Activated T-helper 1 cell treated with anti-CD3 and anti-CD28 coated beads, Interleukin-12 subunit alpha, Interleukin-12 subunit beta, Interleukin-2, Interleukin-4 antibody, amounts not matched to agents 30 ng/mL and 10 ng/mL and 1 ng/mL, durations not matched to agents 14 hours and 24 hours and 36 hours (primary cell): ENCODE measurements at regions of chr14 and their contacts with region 1.

Region 1: GRCh38 chr14:77580964-77581505 is 35.4 kb downstream of the SPTLC2 start:
- DNase-seq: no peak
- H3K4me3 Mint-ChIP-seq: peak overlapping the region; percentile 52
- H3K27ac Mint-ChIP-seq: no peak overlapping the region
- H3K4me1 Mint-ChIP-seq: peaks cover 24% of the 10 kb centered on the region
- H3K27me3 Mint-ChIP-seq: no peaks in the 10 kb centered on the region

Region 2: GRCh38 chr14:77641534-77642341 is 60.7 kb after region 1 on chr14:
- intact Hi-C with region 1: loop called (anchors 2 kb)
- DNase-seq: peak; percentile 46
- H3K4me3 Mint-ChIP-seq: peak overlapping the region; percentile 78
- H3K27ac Mint-ChIP-seq: peak overlapping the region; percentile 92
- H3K4me1 Mint-ChIP-seq: peaks cover 20% of the 10 kb centered on the region
- H3K27me3 Mint-ChIP-seq: no peaks in the 10 kb centered on the region

Region 3: GRCh38 chr14:77707724-77708408 is 126.8 kb after region 1 on chr14 and contains the starts of genes ALKBH1 and SLIRP:
- intact Hi-C with region 1: no loop called
- DNase-seq: peak; percentile 81
- H3K4me3 Mint-ChIP-seq: peak within 1 kb of the TSS; percentile 99
- H3K27ac Mint-ChIP-seq: peak within 1 kb of the TSS; percentile 98
- H3K4me1 Mint-ChIP-seq: peaks cover 41% of the 10 kb centered on the region
- H3K27me3 Mint-ChIP-seq: no peaks in the 10 kb centered on the region
- total RNA-seq, gene ALKBH1: 16.3 and 21.9 TPM in 2 replicates
- total RNA-seq, gene SLIRP: 177 and 178 TPM in 2 replicates

Region 4: DNA sequence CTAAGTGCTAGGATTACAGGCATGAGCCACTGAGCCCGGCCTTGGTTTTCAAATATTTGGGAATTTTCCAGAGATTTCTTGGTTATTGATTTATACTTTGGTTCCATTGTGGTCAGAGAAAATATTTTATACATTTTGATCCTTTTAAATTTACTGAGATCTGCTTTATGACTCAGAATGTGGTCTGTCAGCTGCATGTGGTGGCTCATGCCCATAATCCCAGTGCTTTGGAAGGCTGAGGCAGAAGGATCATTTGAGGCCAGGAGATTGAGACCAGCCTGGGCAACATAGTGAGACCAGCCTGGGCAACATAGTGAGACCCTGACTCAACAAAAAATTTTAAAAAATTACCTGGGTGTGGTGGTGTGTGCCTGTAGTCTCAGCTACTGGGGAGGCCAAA is 268.7 kb after region 1 on chr14:
- intact Hi-C with region 1: no loop called
- DNase-seq: no peak
- H3K4me3 Mint-ChIP-seq: no peak overlapping the region
- H3K27ac Mint-ChIP-seq: no peak overlapping the region
- H3K4me1 Mint-ChIP-seq: no peaks in the 10 kb centered on the region
- H3K27me3 Mint-ChIP-seq: no peaks in the 10 kb centered on the region